Activated CD4-positive, alpha-beta memory T cell treated with anti-CD3 and anti-CD28 coated beads, Interleukin-2, amount 10 ng/mL, durations not matched to agents 7 days and 5 days (primary cell): ENCODE measurements at regions of chr14 and their contacts with region 1.

Region 1: GRCh38 chr14:91244501-91244901 is at the start of gene GPR68:
- DNase-seq: no peak
- H3K4me3 Mint-ChIP-seq: peak within 1 kb of the TSS; percentile 96
- H3K27ac Mint-ChIP-seq: peak within 1 kb of the TSS; percentile 97
- H3K4me1 Mint-ChIP-seq: peaks cover 82% of the 10 kb centered on the region
- H3K27me3 Mint-ChIP-seq: no peaks in the 10 kb centered on the region
- total RNA-seq, gene GPR68: 36.9 to 39.8 TPM

Region 2: DNA sequence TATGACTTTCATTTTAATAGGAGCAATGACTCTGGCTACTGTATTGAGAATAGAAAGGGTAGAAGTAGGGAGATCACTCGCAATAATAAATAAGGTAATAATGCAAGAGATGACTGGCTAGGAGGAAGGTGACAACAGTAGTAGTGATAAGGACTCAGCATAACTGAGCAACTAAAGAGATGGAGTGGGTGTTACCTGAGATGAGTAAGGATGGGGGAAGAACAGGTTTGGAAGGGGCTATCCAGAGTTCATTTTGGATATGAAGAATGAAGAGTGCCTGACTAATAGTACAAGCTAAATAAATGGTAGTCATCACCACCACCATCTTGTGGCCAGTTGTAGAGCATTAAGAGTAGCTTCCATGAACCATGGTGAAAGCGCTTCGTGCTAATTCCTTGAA is 285.2 kb before region 1 on chr14:
- CTCF ChIA-PET with region 1: no interaction called
- POLR2A ChIA-PET with region 1: no interaction called
- DNase-seq: no peak
- H3K4me3 Mint-ChIP-seq: no peak overlapping the region
- H3K27ac Mint-ChIP-seq: no peak overlapping the region
- H3K4me1 Mint-ChIP-seq: peaks cover 6% of the 10 kb centered on the region
- H3K27me3 Mint-ChIP-seq: no peaks in the 10 kb centered on the region

Region 3: GRCh38 chr14:91060351-91061055 is 184.0 kb before region 1 on chr14 and contains the start of gene RPS6KA5:
- CTCF ChIA-PET with region 1: no interaction called
- POLR2A ChIA-PET with region 1: interaction called, 58 read pairs
- DNase-seq: peak; percentile 100
- H3K4me3 Mint-ChIP-seq: peak within 1 kb of the TSS; percentile 86
- H3K27ac Mint-ChIP-seq: peak within 1 kb of the TSS; percentile 73
- H3K4me1 Mint-ChIP-seq: peaks cover 62% of the 10 kb centered on the region
- H3K27me3 Mint-ChIP-seq: no peaks in the 10 kb centered on the region
- total RNA-seq, gene RPS6KA5: 44.5 to 49.9 TPM

Region 4: GRCh38 chr14:91202234-91202974 is 42.1 kb before region 1 on chr14:
- CTCF ChIA-PET with region 1: interaction called, 6 read pairs
- POLR2A ChIA-PET with region 1: interaction called, 46 read pairs
- DNase-seq: peak; percentile 63
- H3K4me3 Mint-ChIP-seq: peak overlapping the region; percentile 37
- H3K27ac Mint-ChIP-seq: peak overlapping the region; percentile 81
- H3K4me1 Mint-ChIP-seq: peaks cover 68% of the 10 kb centered on the region
- H3K27me3 Mint-ChIP-seq: no peaks in the 10 kb centered on the region

Region 5: DNA sequence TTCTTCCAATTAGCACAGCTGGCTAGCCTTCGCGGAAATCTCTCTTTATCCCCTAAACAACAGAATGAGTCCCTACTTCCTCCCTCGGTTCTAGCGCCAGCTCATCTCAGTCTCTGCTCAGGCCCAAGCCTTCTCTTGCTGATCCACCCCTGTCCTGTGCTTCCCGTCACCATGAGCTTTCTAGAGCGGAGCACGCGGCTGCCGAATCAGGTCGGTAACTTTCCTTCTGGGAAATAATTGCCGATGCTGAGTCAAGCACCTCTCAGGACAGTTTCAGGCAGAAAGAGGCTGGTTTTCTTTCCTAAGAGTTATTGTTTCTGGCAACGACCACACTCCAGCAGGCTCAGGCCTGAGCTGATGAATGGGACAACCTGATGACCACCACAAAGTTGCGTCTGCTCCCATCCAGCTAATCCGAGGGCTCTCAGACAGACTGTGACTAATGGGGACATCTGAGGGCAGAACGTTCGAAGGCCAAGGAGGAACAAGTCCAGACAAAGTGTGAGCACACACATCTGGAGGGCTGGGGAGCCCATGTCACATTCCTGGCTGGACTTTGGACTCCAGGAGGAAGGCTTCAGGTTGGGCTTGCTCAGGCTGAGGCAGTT is 13.6 kb after region 1 on chr14:
- CTCF ChIA-PET with region 1: interaction called, 13 read pairs
- POLR2A ChIA-PET with region 1: interaction called, 559 read pairs
- DNase-seq: no peak
- H3K4me3 Mint-ChIP-seq: no peak overlapping the region
- H3K27ac Mint-ChIP-seq: peak overlapping the region; percentile 64
- H3K4me1 Mint-ChIP-seq: peaks cover 79% of the 10 kb centered on the region
- H3K27me3 Mint-ChIP-seq: no peaks in the 10 kb centered on the region

Region 6: DNA sequence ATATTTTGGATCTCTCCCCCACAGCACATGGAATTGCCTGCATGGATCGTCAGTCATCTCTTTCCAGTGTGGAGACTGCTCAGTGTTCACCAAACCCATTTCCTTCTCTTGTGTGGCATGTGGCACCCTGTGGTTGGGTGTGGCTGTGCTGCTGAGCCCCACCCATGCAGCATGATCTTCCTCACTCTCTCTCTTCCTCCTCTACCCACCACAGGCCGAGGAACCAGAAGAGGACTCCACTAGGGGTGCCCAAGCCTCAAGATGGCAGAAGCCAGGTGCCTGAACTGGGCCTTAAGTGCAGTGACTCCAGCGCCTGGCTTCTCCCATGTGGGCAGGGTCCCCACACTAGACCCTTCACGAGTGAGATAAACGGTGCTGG is 66.8 kb after region 1 on chr14:
- CTCF ChIA-PET with region 1: no interaction called
- POLR2A ChIA-PET with region 1: interaction called, 45 read pairs
- DNase-seq: peak; percentile 85
- H3K4me3 Mint-ChIP-seq: peak overlapping the region; percentile 69
- H3K27ac Mint-ChIP-seq: peak overlapping the region; percentile 96
- H3K4me1 Mint-ChIP-seq: peaks cover 72% of the 10 kb centered on the region
- H3K27me3 Mint-ChIP-seq: no peaks in the 10 kb centered on the region

Region 7: DNA sequence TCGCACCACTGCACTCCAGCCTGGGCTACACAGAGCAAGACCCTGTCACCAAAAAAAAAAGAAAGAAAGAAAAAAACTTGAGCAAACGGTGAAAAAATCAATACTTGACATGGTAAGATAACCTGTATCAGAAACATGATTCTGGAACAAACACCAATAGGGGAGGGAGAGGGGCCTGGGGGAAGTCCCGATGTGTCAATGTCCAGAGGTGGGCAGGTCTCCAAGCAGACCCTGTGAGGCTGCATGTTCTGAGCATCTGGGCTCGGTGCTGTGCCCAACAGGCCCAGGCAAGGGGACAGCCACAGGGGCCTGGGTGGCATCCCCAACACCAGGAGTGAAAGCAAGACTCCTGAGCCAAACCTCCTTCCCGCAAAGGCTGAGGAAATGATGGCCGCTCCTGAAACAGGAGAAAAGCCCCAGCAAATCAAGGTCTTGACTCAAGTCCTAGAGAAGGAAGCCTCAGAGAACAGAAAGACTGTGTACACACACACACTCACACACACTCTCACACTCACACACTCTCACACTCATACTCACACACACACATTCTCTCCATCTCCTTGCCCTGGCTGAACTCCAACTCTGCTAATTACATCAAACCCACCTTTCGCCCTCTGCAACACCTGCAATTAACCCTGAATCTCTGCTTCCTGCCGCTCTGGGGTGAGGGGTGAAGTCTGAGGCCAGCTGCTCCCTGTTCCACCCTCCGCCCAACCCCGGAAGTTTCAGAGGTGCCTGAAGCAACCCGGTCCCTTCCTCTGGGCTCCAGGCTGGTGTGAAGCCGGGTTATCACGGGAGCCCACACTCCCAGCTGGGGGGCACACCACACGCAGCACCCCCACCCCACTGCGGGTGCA is 152.7 kb after region 1 on chr14:
- CTCF ChIA-PET with region 1: no interaction called
- POLR2A ChIA-PET with region 1: interaction called, 12 read pairs
- DNase-seq: peak; percentile 81
- H3K4me3 Mint-ChIP-seq: peak overlapping the region; percentile 68
- H3K27ac Mint-ChIP-seq: peak overlapping the region; percentile 85
- H3K4me1 Mint-ChIP-seq: peaks cover 95% of the 10 kb centered on the region
- H3K27me3 Mint-ChIP-seq: no peaks in the 10 kb centered on the region